ENCODE measurements at regions of chr5 and their contacts with region 1.

Region 1: DNA sequence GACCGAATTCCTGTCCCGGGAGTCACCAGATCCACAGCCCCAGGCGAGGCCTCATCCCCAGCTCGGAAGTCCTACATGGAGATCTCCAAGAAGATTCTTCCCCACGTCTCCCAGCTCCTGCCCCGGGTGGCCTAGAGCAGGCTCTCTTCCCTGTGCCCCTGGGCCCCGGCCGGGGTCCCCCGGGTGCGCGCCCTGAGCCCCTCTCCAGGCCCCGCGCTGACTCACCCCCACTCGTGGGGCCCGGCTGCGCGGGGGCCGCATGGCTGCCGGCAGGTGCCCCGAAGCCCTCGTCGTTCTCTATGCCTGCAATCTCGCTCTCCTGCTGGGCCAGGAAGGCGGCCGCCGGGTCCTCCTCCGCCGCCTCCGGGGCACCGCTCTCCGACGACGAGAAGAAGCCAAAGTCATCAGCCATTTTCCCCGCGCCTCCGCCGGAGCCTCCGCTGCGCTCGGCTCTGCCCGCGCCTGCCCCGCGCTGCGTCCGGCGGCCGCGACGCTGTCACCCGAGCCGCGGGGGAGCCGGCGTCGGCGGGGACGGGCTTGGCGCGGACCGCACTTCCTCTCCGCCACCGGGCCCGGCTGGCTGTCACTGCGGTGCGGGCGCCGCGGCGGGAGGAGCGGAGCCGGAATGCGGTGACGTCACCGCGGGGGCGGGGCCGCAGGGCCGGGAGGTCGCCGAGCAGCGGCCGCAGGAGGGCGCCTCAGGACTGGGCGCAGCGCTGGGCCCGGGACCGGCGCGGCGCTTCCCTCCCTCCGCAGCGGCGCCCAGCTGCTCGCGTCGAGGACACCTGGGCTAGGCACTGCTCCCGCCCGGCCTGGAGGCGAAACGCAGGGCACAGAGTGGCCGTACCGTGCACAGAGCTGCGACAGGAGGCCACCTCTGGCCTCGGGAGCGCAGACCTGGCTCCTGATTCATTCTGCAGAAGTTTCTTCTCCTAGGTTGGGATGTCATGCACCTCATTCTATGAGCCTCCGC is at the start of gene CLTB:
- DNase-seq: peak; percentile 81 to 97
- ATAC-seq: peak; percentile 92 to 98 (median 92)
- H3K4me3 ChIP-seq: peak within 1 kb of the TSS; percentile 49
- H3K4me3 Mint-ChIP-seq: peak within 1 kb of the TSS; percentile 89
- H3K27ac ChIP-seq: peak within 1 kb of the TSS; percentile 60
- H3K27ac Mint-ChIP-seq: peak within 1 kb of the TSS; percentile 80 to 86
- H3K4me1 ChIP-seq: peaks cover 19% of the 10 kb centered on the region
- H3K4me1 Mint-ChIP-seq: peaks cover 32 to 48% of the 10 kb centered on the region in 2 donors
- H3K27me3 ChIP-seq: no peaks in the 10 kb centered on the region
- H3K27me3 Mint-ChIP-seq: peaks cover 3 to 6% of the 10 kb centered on the region in 2 donors
- CTCF ChIP-seq: peak; percentile 75
- total RNA-seq, gene CLTB: 60.6 to 77.2 (median 70.4) TPM

Region 2: DNA sequence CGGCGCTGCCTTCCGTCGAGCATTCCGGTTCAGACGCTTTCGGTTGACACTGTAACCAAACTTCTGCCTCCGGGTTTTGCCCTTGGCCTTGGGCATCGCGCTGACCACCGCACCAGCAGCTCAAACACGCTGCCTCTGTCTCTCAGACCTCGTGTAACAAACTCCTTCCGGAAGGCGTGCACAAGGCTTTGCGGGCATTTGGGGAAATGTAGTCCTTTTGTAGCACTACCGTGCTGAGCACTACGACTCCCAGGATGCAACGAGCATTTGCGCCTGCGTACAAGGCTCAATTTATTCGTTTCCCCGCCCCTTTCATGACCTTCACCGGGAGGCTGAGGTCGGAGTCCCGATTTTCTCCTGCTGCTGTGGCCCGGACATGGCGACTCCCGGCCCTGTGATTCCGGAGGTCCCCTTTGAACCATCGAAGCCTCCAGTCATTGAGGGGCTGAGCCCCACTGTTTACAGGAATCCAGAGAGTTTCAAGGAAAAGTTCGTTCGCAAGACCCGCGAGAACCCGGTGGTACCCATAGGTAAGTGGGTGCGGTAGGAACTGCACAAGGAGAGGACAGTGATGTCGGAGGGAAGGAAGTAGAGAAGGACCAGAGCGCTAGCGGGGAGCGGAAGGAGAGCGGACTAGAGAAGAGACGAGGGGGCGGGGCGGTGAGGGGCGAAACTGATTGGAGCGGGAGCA is 27.6 kb before region 1 on chr5 and contains the starts of genes HIGD2A and NOP16:
- intact Hi-C with region 1: loop called (anchors 2 kb)
- DNase-seq: peak; percentile 95 to 99
- ATAC-seq: peak; percentile 87 to 97 (median 89)
- H3K4me3 ChIP-seq: peak within 1 kb of the TSS; percentile 93
- H3K4me3 Mint-ChIP-seq: peak within 1 kb of the TSS; percentile 99
- H3K27ac ChIP-seq: peak within 1 kb of the TSS; percentile 97
- H3K27ac Mint-ChIP-seq: peak within 1 kb of the TSS; percentile 90 to 100
- H3K4me1 ChIP-seq: peaks cover 20% of the 10 kb centered on the region
- H3K4me1 Mint-ChIP-seq: peaks cover 34 to 36% of the 10 kb centered on the region in 2 donors
- H3K27me3 ChIP-seq: no peaks in the 10 kb centered on the region
- H3K27me3 Mint-ChIP-seq: no peaks in the 10 kb centered on the region
- CTCF ChIP-seq: no peak
- total RNA-seq, gene HIGD2A: 83.5 to 90.2 (median 86.2) TPM
- total RNA-seq, gene NOP16: 6.4 to 12.4 (median 12.1) TPM

Region 3: GRCh38 chr5:176447982-176448608 is 31.9 kb after region 1 on chr5 and contains the start of gene FAF2:
- intact Hi-C with region 1: loop called (anchors 2 kb)
- DNase-seq: peak; percentile 98 to 100
- ATAC-seq: peak; percentile 86 to 98 (median 88)
- H3K4me3 ChIP-seq: peak within 1 kb of the TSS; percentile 93
- H3K4me3 Mint-ChIP-seq: peak within 1 kb of the TSS; percentile 96
- H3K27ac ChIP-seq: peak within 1 kb of the TSS; percentile 87
- H3K27ac Mint-ChIP-seq: peak within 1 kb of the TSS; percentile 92 to 98
- H3K4me1 ChIP-seq: peaks cover 21% of the 10 kb centered on the region
- H3K4me1 Mint-ChIP-seq: peaks cover 42 to 49% of the 10 kb centered on the region in 2 donors
- H3K27me3 ChIP-seq: no peaks in the 10 kb centered on the region
- H3K27me3 Mint-ChIP-seq: no peaks in the 10 kb centered on the region
- CTCF ChIP-seq: peak; percentile 92
- total RNA-seq, gene FAF2: 32.1 to 32.5 (median 32.1) TPM

Region 4: GRCh38 chr5:176537608-176538504 is 121.6 kb after region 1 on chr5:
- intact Hi-C with region 1: loop called (anchors 2 kb)
- DNase-seq: peak; percentile 93 to 99
- ATAC-seq: peak; percentile 67 to 87 (median 73)
- H3K4me3 ChIP-seq: peak overlapping the region; percentile 98
- H3K4me3 Mint-ChIP-seq: peak overlapping the region; percentile 97
- H3K27ac ChIP-seq: peak overlapping the region; percentile 100
- H3K27ac Mint-ChIP-seq: peak overlapping the region; percentile 99 to 100
- H3K4me1 ChIP-seq: peaks cover 73% of the 10 kb centered on the region
- H3K4me1 Mint-ChIP-seq: peaks cover 84 to 85% of the 10 kb centered on the region in 2 donors
- H3K27me3 ChIP-seq: no peaks in the 10 kb centered on the region
- H3K27me3 Mint-ChIP-seq: no peaks in the 10 kb centered on the region
- CTCF ChIP-seq: no peak

Region 5: GRCh38 chr5:176559683-176560082 is 143.4 kb after region 1 on chr5:
- intact Hi-C with region 1: loop called (anchors 5 kb)
- DNase-seq: peak in 1 of 2 donors; percentile 67
- ATAC-seq: peak in 2 of 3 donors; percentile 52 to 73
- H3K4me3 ChIP-seq: no peak overlapping the region
- H3K4me3 Mint-ChIP-seq: no peak overlapping the region
- H3K27ac ChIP-seq: no peak overlapping the region
- H3K27ac Mint-ChIP-seq: no peak overlapping the region
- H3K4me1 ChIP-seq: no peaks in the 10 kb centered on the region
- H3K4me1 Mint-ChIP-seq: peaks cover 7 to 21% of the 10 kb centered on the region in 2 donors
- H3K27me3 ChIP-seq: no peaks in the 10 kb centered on the region
- H3K27me3 Mint-ChIP-seq: peaks cover 12 to 19% of the 10 kb centered on the region in 2 donors
- CTCF ChIP-seq: no peak

Region 6: GRCh38 chr5:176596689-176597416 is 180.6 kb after region 1 on chr5:
- intact Hi-C with region 1: loop called (anchors 5 kb)
- DNase-seq: peak; percentile 35 to 84
- ATAC-seq: peak; percentile 65 to 87 (median 83)
- H3K4me3 ChIP-seq: no peak overlapping the region
- H3K4me3 Mint-ChIP-seq: peak overlapping the region; percentile 80
- H3K27ac ChIP-seq: no peak overlapping the region
- H3K27ac Mint-ChIP-seq: peak overlapping the region in 1 of 2 donors; percentile 38
- H3K4me1 ChIP-seq: peaks cover 6% of the 10 kb centered on the region
- H3K4me1 Mint-ChIP-seq: peaks cover 0 to 7% of the 10 kb centered on the region in 2 donors
- H3K27me3 ChIP-seq: no peaks in the 10 kb centered on the region
- H3K27me3 Mint-ChIP-seq: peaks cover 0 to 21% of the 10 kb centered on the region in 2 donors
- CTCF ChIP-seq: peak; percentile 18

Measured in natural killer cell (primary cell).